ENCODE measurements at regions of chr5 and their contacts with region 1.

Region 1: GRCh38 chr5:80083101-80083890 is 48.1 kb downstream of the THBS4 start:
- DNase-seq: peak in 2 of 5 donors; percentile 23 to 34
- ATAC-seq: peak; percentile 54 to 85 (median 82)
- H3K4me3 ChIP-seq: peak overlapping the region in 11 of 12 donors; percentile 2 to 49 (median 42)
- H3K27ac ChIP-seq: peak overlapping the region in 11 of 12 donors; percentile 40 to 80 (median 64)
- H3K4me1 ChIP-seq: peaks cover 0 to 23% (median 11%) of the 10 kb centered on the region in 12 donors
- H3K27me3 ChIP-seq: no peaks in the 10 kb centered on the region
- CTCF ChIP-seq: peak; percentile 63 to 89 (median 74)
- POLR2A ChIP-seq: no peak

Region 2: DNA sequence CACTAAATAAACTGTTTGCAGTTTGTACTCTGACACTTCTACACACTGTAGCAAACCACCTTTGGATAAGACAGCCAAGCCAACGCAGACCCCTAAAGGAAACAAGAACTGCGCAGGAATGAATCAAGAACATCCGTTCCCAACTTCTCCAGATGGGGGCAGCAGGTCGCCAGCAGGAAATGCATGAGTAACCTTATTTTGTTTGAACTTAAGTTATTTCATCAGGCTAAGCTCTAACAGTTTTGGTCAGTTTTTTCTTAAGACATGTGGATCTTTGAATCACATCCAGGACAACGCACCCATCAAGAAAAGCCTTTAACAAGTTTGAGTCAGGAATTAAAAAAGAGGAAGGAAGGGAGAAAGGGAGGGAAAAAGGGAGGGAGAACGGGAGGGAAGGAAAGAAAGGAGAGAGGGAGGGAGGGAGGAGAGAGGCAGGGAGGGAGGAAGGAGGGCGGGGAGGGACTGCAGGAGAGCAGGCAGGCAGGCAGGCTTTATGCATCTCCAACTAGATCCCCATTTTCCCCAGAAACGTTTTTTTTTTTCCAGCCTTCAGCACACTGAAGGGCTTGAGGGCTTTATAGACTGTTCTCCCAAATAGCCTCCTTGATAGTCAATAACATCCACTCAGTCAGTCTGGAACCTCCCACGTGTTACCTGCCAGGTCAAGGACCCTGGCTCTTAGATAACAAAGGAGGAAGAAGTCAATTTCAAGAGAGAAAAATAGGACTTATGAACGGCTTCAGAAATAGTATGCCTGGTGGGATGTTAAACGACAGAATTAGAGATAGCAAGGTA is 949.4 kb before region 1 on chr5:
- intact Hi-C with region 1: loop called in 1 of 10 experiments (anchors 10 kb)
- DNase-seq: peak in 4 of 5 donors; percentile 42 to 51 (median 50)
- ATAC-seq: peak; percentile 55 to 88 (median 68)
- H3K4me3 ChIP-seq: peak overlapping the region in 10 of 12 donors; percentile 5 to 46 (median 30)
- H3K27ac ChIP-seq: peak overlapping the region in 7 of 12 donors; percentile 13 to 76 (median 32)
- H3K4me1 ChIP-seq: peaks cover 0 to 12% (median 7%) of the 10 kb centered on the region in 12 donors
- H3K27me3 ChIP-seq: no peaks in the 10 kb centered on the region
- CTCF ChIP-seq: peak; percentile 40 to 79 (median 66)
- POLR2A ChIP-seq: no peak

Region 3: DNA sequence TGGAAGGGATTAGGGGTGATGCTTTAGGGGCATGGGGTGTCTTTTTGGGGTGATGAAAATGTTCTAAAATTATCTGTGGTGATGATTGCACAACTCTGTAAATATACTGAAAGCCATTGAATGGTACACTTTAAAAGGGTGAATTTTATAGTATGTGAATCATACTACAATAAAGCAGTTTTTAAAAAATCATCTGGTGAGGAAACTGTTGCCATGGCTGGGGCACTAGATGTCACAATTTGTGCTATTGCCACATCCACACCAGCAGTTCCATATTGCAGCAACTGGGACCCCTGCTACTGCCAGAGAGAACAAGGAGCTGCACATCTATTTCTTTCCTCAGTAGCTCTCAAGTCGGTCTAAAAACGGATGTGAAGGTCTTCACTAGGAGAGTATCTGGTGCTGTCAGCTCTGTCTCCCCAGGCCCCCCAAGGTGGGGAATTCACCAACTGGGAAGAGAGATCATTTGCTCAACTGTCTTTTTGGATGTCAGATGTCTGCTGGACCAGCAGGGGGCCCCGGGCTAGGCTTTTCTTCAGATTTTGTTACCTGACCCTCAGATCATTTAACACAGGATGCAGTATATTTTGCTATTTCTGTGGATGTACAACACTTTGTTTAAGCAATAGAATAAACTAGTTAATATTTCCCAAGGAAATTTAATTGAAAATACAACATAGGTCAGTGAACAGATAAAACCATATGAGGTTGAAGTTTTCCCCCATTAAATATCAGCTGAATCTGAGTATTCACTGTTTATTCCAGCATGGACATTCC is 380.5 kb before region 1 on chr5:
- intact Hi-C with region 1: loop called in 4 of 10 experiments (anchors 5 to 10 kb)
- DNase-seq: peak in 1 of 5 donors; percentile 29
- ATAC-seq: peak in 2 of 4 donors; percentile 7 to 13
- H3K4me3 ChIP-seq: no peak overlapping the region
- H3K27ac ChIP-seq: peak overlapping the region; percentile 23 to 99 (median 54)
- H3K4me1 ChIP-seq: peaks cover 0 to 60% (median 19%) of the 10 kb centered on the region in 12 donors
- H3K27me3 ChIP-seq: no peaks in the 10 kb centered on the region
- CTCF ChIP-seq: peak; percentile 2 to 65 (median 47)
- POLR2A ChIP-seq: no peak

Region 4: DNA sequence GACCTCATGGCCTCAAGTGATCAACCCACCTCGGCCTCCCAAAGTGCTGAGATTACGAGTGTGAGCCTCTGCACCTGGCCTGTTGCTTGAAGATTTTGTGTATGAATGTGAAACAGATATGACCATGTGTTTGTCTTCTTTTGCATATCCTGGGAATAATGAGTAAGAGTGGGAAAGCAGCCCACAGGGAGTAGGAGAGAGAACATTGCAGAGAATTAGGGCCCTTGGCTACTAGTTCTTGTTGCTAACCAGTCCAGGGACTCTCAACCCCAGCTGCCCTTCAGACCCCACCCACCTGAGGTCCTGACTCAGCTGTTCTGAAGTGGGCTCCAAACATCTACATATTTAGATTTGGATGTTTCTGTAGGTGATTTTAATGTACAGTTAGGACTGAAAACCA is 217.7 kb before region 1 on chr5:
- intact Hi-C with region 1: loop called in 1 of 10 experiments (anchors 5 kb)
- DNase-seq: no peak
- ATAC-seq: peak; percentile 29 to 80 (median 44)
- H3K4me3 ChIP-seq: no peak overlapping the region
- H3K27ac ChIP-seq: peak overlapping the region in 3 of 12 donors; percentile 3 to 28 (median 28)
- H3K4me1 ChIP-seq: peaks cover 0 to 5% (median 0%) of the 10 kb centered on the region in 12 donors
- H3K27me3 ChIP-seq: no peaks in the 10 kb centered on the region
- CTCF ChIP-seq: no peak
- POLR2A ChIP-seq: no peak

Region 5: GRCh38 chr5:79999722-80000121 is 83.6 kb before region 1 on chr5:
- intact Hi-C with region 1: loop called in 2 of 10 experiments (anchors 5 kb)
- DNase-seq: no peak
- ATAC-seq: no peak
- H3K4me3 ChIP-seq: no peak overlapping the region
- H3K27ac ChIP-seq: no peak overlapping the region
- H3K4me1 ChIP-seq: no peaks in the 10 kb centered on the region
- H3K27me3 ChIP-seq: no peaks in the 10 kb centered on the region
- CTCF ChIP-seq: no peak
- POLR2A ChIP-seq: no peak